Activated CD8-positive, alpha-beta T cell treated with anti-CD3 and anti-CD28 coated beads for 36 hours (primary cell): ENCODE measurements at regions of chr13 and their contacts with region 1.

Region 1: DNA sequence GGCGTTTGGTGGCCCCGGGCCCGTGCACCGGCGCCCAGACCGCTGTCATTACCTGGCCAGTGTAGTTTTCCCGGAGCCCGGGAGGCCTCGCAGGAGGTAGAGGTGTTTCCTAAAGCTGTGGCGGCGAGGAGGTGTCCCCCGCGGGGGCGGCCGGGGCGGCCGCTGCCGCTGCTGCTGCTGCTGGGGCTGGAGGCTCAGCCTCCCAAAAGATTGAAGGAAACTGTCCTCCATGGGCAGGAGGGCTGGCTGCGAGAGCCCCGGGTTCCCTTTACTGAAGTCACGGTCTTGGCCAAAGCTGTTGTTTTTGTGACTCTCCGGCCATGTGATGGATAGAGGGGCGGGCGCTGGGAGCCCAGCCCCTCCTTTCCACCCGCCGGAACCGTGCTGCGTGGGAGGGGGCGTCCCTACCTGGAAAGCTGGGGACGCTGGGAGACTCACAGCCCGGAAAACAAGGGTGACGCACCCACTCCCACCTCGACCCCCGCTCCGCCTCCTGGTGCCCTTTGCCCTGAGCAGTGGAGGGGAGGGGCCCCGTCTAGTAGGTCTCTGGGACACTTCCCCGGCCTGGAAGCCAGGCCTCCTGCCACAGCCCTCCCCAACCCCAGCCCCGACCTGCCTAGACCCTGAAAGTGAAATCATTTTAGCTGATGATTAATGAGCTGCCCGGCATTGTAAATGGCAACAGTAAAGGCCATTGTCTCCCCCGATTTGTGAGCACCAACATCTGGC is at the start of gene N4BP2L1:
- DNase-seq: peak; percentile 96
- ATAC-seq: peak; percentile 85
- H3K4me3 Mint-ChIP-seq: peak within 1 kb of the TSS; percentile 91
- H3K27ac Mint-ChIP-seq: peak within 1 kb of the TSS; percentile 98
- H3K4me1 Mint-ChIP-seq: peaks cover 33% of the 10 kb centered on the region
- H3K27me3 Mint-ChIP-seq: no peaks in the 10 kb centered on the region
- CTCF ChIP-seq: no peak
- total RNA-seq, gene N4BP2L1: 26.2 to 32.2 TPM

Region 2: GRCh38 chr13:32315238-32316027 is 112.6 kb before region 1 on chr13 and contains the starts of genes BRCA2 and ZAR1L:
- CTCF ChIA-PET with region 1: interaction called, 5 read pairs
- POLR2A ChIA-PET with region 1: interaction called, 38 read pairs
- intact Hi-C with region 1: loop called (anchors 5 kb)
- DNase-seq: peak; percentile 94
- ATAC-seq: peak; percentile 92
- H3K4me3 Mint-ChIP-seq: peak within 1 kb of the TSS; percentile 92
- H3K27ac Mint-ChIP-seq: peak within 1 kb of the TSS; percentile 100
- H3K4me1 Mint-ChIP-seq: peaks cover 14% of the 10 kb centered on the region
- H3K27me3 Mint-ChIP-seq: no peaks in the 10 kb centered on the region
- CTCF ChIP-seq: no peak
- total RNA-seq, gene BRCA2: 24.9 to 27.2 TPM
- total RNA-seq, gene ZAR1L: not detected

Region 3: DNA sequence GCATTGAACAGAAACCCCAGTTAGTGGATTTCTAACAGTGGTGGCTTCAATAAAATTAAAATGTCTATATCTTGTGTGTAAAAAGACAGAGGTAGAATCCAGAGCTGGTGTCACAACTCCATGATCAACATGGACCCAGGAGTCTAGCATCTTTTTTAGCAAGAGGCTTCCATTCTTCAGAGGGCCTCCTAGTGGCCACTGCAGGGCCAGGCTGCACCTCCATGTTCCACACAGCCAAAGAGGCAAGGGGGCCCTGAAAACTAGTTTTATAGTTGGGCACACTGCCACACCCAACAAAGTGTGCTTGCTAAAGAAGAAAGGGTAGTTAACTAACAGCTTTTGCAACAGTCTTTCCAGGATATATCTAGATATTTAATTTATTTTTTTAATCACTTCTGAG is 13.0 kb before region 1 on chr13:
- CTCF ChIA-PET with region 1: interaction called, 15 read pairs
- POLR2A ChIA-PET with region 1: interaction called, 4 read pairs
- intact Hi-C with region 1: no loop called
- DNase-seq: peak; percentile 49
- ATAC-seq: peak; percentile 79
- H3K4me3 Mint-ChIP-seq: no peak overlapping the region
- H3K27ac Mint-ChIP-seq: no peak overlapping the region
- H3K4me1 Mint-ChIP-seq: peaks cover 14% of the 10 kb centered on the region
- H3K27me3 Mint-ChIP-seq: no peaks in the 10 kb centered on the region
- CTCF ChIP-seq: peak; percentile 26

Region 4: GRCh38 chr13:32438871-32439588 is 11.0 kb after region 1 on chr13:
- CTCF ChIA-PET with region 1: interaction called, 4 read pairs
- POLR2A ChIA-PET with region 1: interaction called, 10 read pairs
- intact Hi-C with region 1: no loop called
- DNase-seq: no peak
- ATAC-seq: no peak
- H3K4me3 Mint-ChIP-seq: no peak overlapping the region
- H3K27ac Mint-ChIP-seq: no peak overlapping the region
- H3K4me1 Mint-ChIP-seq: peaks cover 4% of the 10 kb centered on the region
- H3K27me3 Mint-ChIP-seq: no peaks in the 10 kb centered on the region
- CTCF ChIP-seq: no peak

Region 5: GRCh38 chr13:32538621-32539246 is 110.7 kb after region 1 on chr13 and contains the start of gene N4BP2L2:
- CTCF ChIA-PET with region 1: no interaction called
- POLR2A ChIA-PET with region 1: interaction called, 5 read pairs
- intact Hi-C with region 1: loop called (anchors 5 kb)
- DNase-seq: peak; percentile 95
- ATAC-seq: peak; percentile 97
- H3K4me3 Mint-ChIP-seq: peak within 1 kb of the TSS; percentile 99
- H3K27ac Mint-ChIP-seq: peak within 1 kb of the TSS; percentile 99
- H3K4me1 Mint-ChIP-seq: peaks cover 38% of the 10 kb centered on the region
- H3K27me3 Mint-ChIP-seq: no peaks in the 10 kb centered on the region
- CTCF ChIP-seq: no peak
- total RNA-seq, gene N4BP2L2: 84.5 to 85.2 TPM